GM23248 (cell line): ENCODE measurements at regions of chr14 and their contacts with region 1.

Region 1: GRCh38 chr14:44912041-44912869 is 49.5 kb downstream of the KLHL28 start:
- DNase-seq: peak; percentile 36
- H3K4me3 ChIP-seq: peak overlapping the region; percentile 64
- H3K27ac ChIP-seq: no peak overlapping the region
- H3K4me1 ChIP-seq: no peaks in the 10 kb centered on the region
- H3K27me3 ChIP-seq: no peaks in the 10 kb centered on the region

Region 2: DNA sequence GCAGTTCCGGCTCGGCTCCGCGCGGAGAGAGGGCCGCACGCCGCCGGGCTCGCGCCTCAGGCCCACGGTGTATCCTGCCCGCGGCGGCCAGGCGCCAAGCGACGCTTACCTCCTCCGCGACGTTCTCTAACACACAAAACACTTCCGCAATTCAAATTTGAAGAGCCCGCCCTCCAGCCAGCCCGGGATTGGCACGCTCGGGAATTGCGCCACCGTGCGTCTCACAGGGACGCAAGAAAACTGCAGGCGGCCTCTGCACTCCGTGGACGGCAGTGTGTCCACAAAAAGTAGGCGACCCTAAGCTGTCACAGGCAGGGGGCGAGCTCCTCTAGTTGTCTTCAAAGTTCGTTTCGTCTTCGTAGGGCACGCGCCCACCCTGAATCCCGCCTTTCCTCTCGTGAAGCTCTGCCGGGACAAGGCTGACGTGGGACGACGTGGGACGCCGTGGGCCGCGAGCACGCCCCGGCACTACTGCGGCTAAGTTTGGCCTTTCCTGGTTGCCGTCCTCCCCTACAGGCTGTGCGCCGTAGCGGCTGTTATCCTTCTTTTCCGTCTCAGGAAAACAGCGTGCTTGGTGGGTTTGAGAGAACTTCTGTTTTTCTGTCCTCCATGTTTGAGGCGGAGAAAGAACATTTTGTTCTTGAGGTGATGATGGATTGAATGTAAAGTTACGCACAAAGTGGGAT is 341.0 kb after region 1 on chr14 and contains the start of gene MIS18BP1:
- in situ Hi-C with region 1: loop called (anchors 25 kb)
- DNase-seq: peak; percentile 99
- H3K4me3 ChIP-seq: peak within 1 kb of the TSS; percentile 84
- H3K27ac ChIP-seq: peak within 1 kb of the TSS; percentile 94
- H3K4me1 ChIP-seq: peaks cover 25% of the 10 kb centered on the region
- H3K27me3 ChIP-seq: no peaks in the 10 kb centered on the region
- total RNA-seq, gene MIS18BP1: 28.9 and 30.2 TPM in 2 replicates